Posterior vena cava (tissue), 2 donors: ENCODE measurements at regions of chrX and their contacts with region 1.

Region 1: GRCh38 chrX:123960042-123960611 is 1.4 kb upstream of the STAG2 start:
- DNase-seq: peak; percentile 97

Region 2: DNA sequence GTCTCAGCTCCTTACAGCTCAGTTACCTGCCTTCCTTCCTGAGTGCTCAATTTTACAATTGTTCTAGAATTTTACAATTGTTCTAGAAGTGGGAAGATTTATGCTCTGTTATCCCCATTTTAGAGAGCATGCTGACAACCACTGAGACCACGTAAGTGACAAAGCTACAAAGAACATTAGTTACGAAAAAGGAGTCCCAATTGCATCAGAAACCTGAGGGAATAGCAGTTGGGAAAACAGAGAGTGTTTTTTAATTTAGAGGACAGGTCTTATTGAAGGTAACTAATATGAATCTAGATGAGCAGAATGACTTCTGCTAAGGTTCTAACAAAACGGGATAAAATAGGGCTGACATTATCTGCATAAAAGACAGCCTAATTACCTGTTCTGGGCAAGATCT is 330.6 kb before region 1 on chrX:
- intact Hi-C with region 1: no loop called
- DNase-seq: no peak

Region 3: DNA sequence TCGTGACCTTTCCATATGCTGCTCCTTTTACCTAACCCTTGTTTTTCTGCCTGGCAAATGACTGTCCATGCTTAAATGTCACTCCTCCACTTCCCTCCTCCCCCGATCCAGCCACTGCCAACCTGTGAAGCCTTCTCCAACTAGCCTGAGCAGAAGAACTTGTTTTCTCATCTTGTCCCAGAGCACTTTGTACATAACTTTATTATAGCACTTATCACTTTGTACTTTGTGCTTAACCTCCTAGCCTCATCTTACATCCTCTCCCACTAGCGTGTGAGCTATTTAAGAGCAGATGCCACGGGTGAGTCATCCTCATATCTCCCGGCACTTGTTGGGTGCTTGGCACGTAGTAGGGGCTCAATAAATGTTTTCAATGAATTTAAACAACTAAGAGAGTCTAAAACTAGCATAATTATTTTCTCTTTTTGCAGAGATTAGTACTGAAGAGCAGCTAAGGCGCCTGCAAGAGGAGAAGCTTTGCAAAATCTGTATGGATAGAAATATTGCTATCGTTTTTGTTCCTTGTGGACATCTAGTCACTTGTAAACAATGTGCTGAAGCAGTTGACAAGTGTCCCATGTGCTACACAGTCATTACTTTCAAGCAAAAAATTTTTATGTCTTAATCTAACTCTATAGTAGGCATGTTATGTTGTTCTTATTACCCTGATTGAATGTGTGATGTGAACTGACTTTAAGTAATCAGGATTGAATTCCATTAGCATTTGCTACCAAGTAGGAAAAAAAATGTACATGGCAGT is 53.4 kb before region 1 on chrX:
- intact Hi-C with region 1: no loop called
- DNase-seq: no peak

Region 4: GRCh38 chrX:123975180-123975579 is 15.1 kb after region 1 on chrX:
- intact Hi-C with region 1: loop called in 1 of 2 experiments (anchors 2 kb)
- DNase-seq: no peak

Region 5: DNA sequence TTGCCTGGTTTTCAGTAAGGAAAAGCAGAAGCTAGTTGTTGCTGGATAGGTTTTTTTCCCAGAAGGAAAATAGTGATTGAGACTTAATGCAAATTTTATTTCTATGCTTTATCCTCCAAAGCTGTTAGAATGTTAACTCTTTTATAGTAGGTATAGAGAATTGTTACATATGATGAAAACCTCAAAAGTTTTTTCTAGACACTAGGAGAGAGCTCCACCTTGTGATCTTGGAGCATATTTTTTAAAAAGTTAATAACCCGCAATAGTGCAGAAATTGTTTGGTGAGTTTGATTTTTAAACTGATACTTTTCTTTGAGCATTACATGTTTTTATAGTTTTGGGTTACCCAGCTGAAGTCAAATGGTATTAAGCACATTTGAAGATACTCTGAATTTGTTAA is 57.9 kb after region 1 on chrX:
- intact Hi-C with region 1: loop called in 1 of 2 experiments (anchors 2 kb)
- DNase-seq: no peak

Region 6: GRCh38 chrX:124440695-124441094 is 480.6 kb after region 1 on chrX:
- intact Hi-C with region 1: loop called in 1 of 2 experiments (anchors 5 kb)
- DNase-seq: no peak